ENCODE measurements at regions of chr12 and their contacts with region 1.

Region 1: GRCh38 chr12:110449799-110450497 is at the start of gene ARPC3:
- DNase-seq: peak; percentile 98
- H3K4me3 ChIP-seq: peak within 1 kb of the TSS; percentile 91
- H3K27ac ChIP-seq: peak within 1 kb of the TSS; percentile 87
- H3K4me1 ChIP-seq: peaks cover 31% of the 10 kb centered on the region
- CTCF ChIP-seq: peak; percentile 81
- total RNA-seq, gene ARPC3: 250 and 256 TPM in 2 replicates

Region 2: GRCh38 chr12:110371408-110372055 is 78.4 kb before region 1 on chr12:
- CTCF ChIA-PET with region 1: no interaction called
- POLR2A ChIA-PET with region 1: no interaction called
- intact Hi-C with region 1: no loop called
- DNase-seq: peak; percentile 89
- H3K4me3 ChIP-seq: peak overlapping the region; percentile 35
- H3K27ac ChIP-seq: peak overlapping the region; percentile 73
- H3K4me1 ChIP-seq: peaks cover 84% of the 10 kb centered on the region
- CTCF ChIP-seq: no peak

Region 3: DNA sequence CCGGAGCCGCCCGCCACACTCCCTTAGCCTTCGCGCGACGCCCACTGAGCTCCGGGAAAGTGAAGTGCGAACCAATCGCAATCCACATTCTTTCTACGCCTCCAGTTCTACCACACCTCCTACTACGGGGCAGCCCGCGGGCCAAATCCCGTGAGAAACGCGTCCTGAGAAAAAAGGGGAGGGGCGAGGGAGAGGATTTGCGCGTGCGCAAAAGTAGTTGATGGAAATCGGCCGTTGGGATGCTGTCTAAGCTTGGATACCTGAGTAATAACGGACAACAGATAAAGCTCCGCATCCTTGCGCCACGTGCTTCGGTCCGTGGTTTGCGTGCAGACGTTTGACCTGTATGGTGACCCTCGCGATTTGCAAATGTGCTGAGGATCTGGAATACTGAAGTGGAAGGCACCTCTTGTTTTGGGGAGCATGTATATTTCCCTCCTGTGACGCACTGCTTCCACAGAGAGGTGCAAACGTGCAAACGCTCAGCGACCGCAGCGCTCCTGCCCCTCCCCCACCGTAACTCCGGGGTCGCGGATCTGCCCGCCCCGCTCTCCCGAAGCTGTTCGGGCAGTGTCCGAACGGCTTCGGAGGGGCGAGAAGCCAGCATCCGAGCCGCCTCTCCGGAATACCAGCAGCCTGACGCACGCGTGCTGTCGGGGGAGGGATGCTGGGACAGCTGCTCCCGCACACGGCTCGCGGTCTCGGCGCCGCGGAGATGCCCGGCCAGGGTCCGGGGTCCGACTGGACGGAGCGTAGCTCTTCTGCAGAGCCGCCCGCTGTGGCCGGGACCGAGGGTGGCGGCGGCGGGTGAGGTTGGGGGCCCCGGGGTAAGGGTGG is 18.5 kb after region 1 on chr12 and contains the starts of genes FAM216A and GPN3:
- CTCF ChIA-PET with region 1: interaction called, 14 read pairs
- POLR2A ChIA-PET with region 1: interaction called, 28 read pairs
- intact Hi-C with region 1: loop called (anchors 1 kb)
- DNase-seq: peak; percentile 99
- H3K4me3 ChIP-seq: peak within 1 kb of the TSS; percentile 95
- H3K27ac ChIP-seq: peak within 1 kb of the TSS; percentile 82
- H3K4me1 ChIP-seq: peaks cover 30% of the 10 kb centered on the region
- CTCF ChIP-seq: no peak
- total RNA-seq, gene FAM216A: 62.5 and 64.6 TPM in 2 replicates
- total RNA-seq, gene GPN3: 18.6 and 24.2 TPM in 2 replicates

Region 4: DNA sequence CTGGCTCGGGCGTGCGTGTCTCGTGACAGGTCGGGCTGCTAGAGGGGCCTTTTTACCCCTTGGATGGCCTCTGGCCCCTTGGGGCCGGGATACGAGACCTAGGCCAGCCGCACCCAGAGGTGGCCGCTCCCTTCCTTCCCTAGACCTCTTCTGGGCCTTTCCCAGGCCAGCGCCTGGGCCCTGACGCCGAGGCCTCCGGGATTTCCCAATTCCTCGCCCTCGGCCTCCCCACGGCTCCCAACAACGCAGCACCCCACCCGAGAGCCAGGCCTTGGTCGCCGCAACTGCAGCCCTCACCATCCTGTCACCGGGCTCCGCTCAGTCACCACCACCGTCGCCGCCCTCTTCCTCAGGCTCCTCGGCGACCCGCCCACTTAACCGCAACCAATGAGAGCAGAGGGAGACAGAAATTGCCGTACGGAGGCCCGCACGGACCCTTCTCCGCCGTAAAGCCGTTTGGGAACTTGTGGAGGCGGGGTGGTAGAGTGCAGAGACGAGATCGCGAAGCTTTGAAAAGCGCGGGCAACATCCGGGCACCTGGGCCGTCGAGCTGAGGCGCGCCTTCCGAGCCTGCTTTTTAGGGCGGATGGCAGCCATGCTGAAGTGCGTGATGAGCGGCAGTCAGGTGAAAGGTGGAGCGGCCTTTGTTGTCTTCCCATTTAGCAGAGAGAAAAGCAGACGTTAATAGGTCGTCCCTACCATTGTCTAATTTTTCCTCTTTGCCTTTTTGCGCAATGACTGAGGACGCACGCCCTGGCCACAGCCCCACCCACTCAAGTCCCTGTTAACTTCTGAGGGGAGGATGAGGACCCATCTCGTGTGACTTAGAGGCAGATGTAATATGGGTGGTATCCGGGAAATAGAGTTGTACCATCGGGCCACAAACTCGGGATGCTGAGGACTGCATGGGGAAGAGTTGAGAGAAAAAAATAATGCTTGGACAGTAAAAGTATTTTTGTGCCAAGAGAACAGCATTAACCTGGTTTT is 52.1 kb after region 1 on chr12 and contains the starts of genes RAD9B and VPS29:
- CTCF ChIA-PET with region 1: no interaction called
- POLR2A ChIA-PET with region 1: interaction called, 9 read pairs
- intact Hi-C with region 1: loop called (anchors 2 kb)
- DNase-seq: peak; percentile 99
- H3K4me3 ChIP-seq: peak within 1 kb of the TSS; percentile 93
- H3K27ac ChIP-seq: peak within 1 kb of the TSS; percentile 80
- H3K4me1 ChIP-seq: peaks cover 29% of the 10 kb centered on the region
- CTCF ChIP-seq: 0 out of 2 replicates have a peak, but pooled peaks have one; percentile 4
- total RNA-seq, gene RAD9B: 0.46 and 0.76 TPM in 2 replicates
- total RNA-seq, gene VPS29: 52.3 and 80.3 TPM in 2 replicates

Region 5: DNA sequence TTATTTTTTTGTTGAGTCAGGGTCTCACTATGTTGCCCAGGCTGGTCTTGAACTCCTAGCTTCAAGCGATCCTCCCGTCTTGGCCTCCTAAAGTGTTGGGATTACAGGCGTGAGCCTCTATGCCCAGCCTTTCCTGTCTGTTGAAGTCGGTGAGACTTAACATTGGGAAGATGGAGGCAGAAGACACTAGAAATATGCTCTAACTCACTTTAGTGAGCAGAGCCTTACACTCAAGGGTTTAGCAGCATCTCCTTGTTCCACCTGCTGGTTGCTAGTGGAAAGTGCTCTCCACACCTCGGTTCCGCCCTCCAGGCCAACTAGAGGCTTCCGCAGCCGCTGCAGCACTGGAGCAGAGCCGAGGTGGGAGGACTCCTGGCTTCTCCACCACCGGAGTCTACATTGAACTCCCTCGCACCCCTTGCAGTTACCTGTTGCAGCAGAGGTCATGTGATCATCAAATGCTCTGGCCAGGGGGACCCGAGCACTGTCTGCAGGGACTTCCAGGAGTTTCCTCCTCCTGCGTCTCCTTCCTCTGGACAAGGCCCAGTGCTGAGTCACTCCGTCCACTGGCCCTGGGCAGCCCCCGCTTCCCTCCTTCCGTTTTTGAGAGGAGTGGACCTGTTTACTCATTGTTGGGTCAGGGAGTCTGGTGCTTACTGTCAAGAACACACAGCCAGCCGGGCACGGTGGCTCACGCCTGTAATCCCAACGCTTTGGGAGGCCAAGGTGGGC is 248.4 kb after region 1 on chr12:
- CTCF ChIA-PET with region 1: no interaction called
- POLR2A ChIA-PET with region 1: no interaction called
- intact Hi-C with region 1: loop called (anchors 2 kb)
- DNase-seq: peak; percentile 93
- H3K4me3 ChIP-seq: no peak overlapping the region
- H3K27ac ChIP-seq: no peak overlapping the region
- H3K4me1 ChIP-seq: peaks cover 22% of the 10 kb centered on the region
- CTCF ChIP-seq: peak; percentile 85

Region 6: GRCh38 chr12:110733089-110733715 is 283.3 kb after region 1 on chr12:
- CTCF ChIA-PET with region 1: no interaction called
- POLR2A ChIA-PET with region 1: no interaction called
- intact Hi-C with region 1: no loop called
- DNase-seq: no peak
- H3K4me3 ChIP-seq: no peak overlapping the region
- H3K27ac ChIP-seq: no peak overlapping the region
- H3K4me1 ChIP-seq: peaks cover 29% of the 10 kb centered on the region
- CTCF ChIP-seq: no peak